Activated B cell treated with CpG ODN at 0.5 μM for 24 hours (primary cell): ENCODE measurements at regions of chr2 and their contacts with region 1.

Region 1: DNA sequence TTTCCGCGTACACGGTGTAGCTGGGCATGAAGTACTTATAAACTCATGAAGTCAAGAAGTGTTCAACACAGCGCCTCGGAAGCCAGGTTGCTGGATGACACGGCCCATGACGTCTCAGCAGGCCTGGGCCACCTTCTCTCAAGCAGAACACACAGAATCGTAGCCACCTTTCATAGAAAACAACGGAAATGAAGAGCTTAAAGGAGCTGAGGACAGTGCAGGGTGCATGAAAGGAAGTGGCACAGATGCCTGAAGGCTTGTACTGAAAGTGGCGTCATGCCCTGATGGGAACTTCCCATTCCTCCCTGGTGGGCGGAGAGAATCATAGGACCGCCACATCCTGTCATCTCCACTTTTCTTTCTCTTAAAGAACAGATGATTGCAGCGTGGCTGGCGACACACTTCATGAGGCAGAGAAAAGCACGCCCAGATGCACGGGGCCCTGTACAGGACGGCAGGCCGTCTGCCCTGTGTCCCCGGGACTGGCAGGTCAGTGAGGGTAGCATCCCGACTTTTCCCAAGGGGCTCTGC is 31.1 kb downstream of the HDAC4 start:
- DNase-seq: peak; percentile 65
- ATAC-seq: peak; percentile 91
- H3K4me3 Mint-ChIP-seq: peak overlapping the region; percentile 74
- H3K27ac Mint-ChIP-seq: peak overlapping the region; percentile 89
- H3K4me1 Mint-ChIP-seq: peaks cover 8% of the 10 kb centered on the region
- H3K27me3 Mint-ChIP-seq: no peaks in the 10 kb centered on the region
- CTCF ChIP-seq: no peak

Region 2: GRCh38 chr2:239267288-239267951 is 102.3 kb before region 1 on chr2:
- CTCF ChIA-PET with region 1: interaction called, 6 read pairs
- POLR2A ChIA-PET with region 1: interaction called, 5 read pairs
- intact Hi-C with region 1: loop called (anchors 1 kb)
- DNase-seq: peak; percentile 75
- ATAC-seq: peak; percentile 96
- H3K4me3 Mint-ChIP-seq: peak overlapping the region; percentile 73
- H3K27ac Mint-ChIP-seq: peak overlapping the region; percentile 44
- H3K4me1 Mint-ChIP-seq: peaks cover 59% of the 10 kb centered on the region
- H3K27me3 Mint-ChIP-seq: peaks cover 55% of the 10 kb centered on the region
- CTCF ChIP-seq: no peak

Region 3: GRCh38 chr2:239293775-239294430 is 75.8 kb before region 1 on chr2:
- CTCF ChIA-PET with region 1: interaction called, 3 read pairs
- POLR2A ChIA-PET with region 1: interaction called, 3 read pairs
- intact Hi-C with region 1: loop called (anchors 1 kb)
- DNase-seq: no peak
- ATAC-seq: peak; percentile 85
- H3K4me3 Mint-ChIP-seq: peak overlapping the region; percentile 28
- H3K27ac Mint-ChIP-seq: no peak overlapping the region
- H3K4me1 Mint-ChIP-seq: peaks cover 71% of the 10 kb centered on the region
- H3K27me3 Mint-ChIP-seq: peaks cover 4% of the 10 kb centered on the region
- CTCF ChIP-seq: no peak

Region 4: GRCh38 chr2:239326831-239327535 is 42.7 kb before region 1 on chr2:
- CTCF ChIA-PET with region 1: no interaction called
- POLR2A ChIA-PET with region 1: no interaction called
- intact Hi-C with region 1: loop called (anchors 5 kb)
- DNase-seq: no peak
- ATAC-seq: peak; percentile 75
- H3K4me3 Mint-ChIP-seq: no peak overlapping the region
- H3K27ac Mint-ChIP-seq: peak overlapping the region; percentile 30
- H3K4me1 Mint-ChIP-seq: peaks cover 28% of the 10 kb centered on the region
- H3K27me3 Mint-ChIP-seq: no peaks in the 10 kb centered on the region
- CTCF ChIP-seq: no peak

Region 5: DNA sequence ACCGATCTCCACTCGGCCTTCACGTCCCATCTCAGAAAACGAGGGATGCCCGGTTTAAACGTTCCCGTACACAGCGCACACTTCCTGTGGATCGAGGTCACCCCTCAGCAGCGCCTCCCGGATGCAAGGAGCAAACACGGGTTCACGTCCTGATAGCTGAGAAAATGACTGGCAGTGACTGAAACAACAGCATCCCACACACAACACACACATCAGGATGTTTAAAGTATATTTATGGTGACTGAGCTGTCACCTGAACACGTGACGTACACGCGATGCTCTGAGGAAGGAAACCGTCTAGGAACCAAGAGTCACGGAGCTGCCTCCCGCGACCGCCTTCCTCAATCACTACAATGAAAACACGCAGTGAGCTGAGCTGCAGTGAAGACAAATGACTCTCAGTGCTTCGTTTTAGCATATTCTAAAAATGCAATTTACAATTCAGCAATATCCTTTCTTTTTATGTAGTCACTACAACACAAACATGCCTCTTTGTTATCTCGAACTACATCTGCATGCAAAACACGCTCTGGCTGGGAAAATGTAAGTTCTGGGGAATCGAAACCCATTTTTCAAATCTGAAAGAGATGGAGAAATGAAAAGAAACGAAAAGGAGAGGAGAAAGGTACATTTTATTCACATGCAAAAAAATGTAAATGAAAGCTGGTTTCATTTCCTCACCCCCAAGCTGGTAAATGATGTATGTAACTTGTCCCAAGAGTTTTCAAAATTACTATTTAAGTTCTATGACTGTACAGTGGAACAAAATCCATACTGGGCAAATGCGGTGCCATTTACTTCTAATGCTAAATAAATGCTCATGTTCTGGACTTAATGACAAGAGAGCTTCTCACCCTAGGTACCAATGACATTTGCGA is 11.4 kb after region 1 on chr2:
- CTCF ChIA-PET with region 1: interaction called, 17 read pairs
- POLR2A ChIA-PET with region 1: interaction called, 75 read pairs
- intact Hi-C with region 1: loop called (anchors 1 kb)
- DNase-seq: peak; percentile 55
- ATAC-seq: peak; percentile 66
- H3K4me3 Mint-ChIP-seq: peak overlapping the region; percentile 85
- H3K27ac Mint-ChIP-seq: peak overlapping the region; percentile 91
- H3K4me1 Mint-ChIP-seq: peaks cover 43% of the 10 kb centered on the region
- H3K27me3 Mint-ChIP-seq: no peaks in the 10 kb centered on the region
- CTCF ChIP-seq: no peak